Right lobe of liver (tissue), 6 donors: ENCODE measurements at regions of chr4 and their contacts with region 1.

Region 1: GRCh38 chr4:3765271-3766040 is 729 bp upstream of the ADRA2C start:
- DNase-seq: peak in 2 of 3 donors; percentile 40 to 59
- ATAC-seq: peak; percentile 67 to 84 (median 76)
- H3K4me3 ChIP-seq: peak overlapping the region in 1 of 3 donors; percentile 39
- H3K27ac ChIP-seq: no peak overlapping the region
- H3K4me1 ChIP-seq: peaks cover 0 to 3% (median 0%) of the 10 kb centered on the region in 4 donors
- H3K27me3 ChIP-seq: no peaks in the 10 kb centered on the region
- CTCF ChIP-seq: peak in 3 of 4 donors; percentile 17 to 55 (median 22)
- POLR2A ChIP-seq: no peak

Region 2: DNA sequence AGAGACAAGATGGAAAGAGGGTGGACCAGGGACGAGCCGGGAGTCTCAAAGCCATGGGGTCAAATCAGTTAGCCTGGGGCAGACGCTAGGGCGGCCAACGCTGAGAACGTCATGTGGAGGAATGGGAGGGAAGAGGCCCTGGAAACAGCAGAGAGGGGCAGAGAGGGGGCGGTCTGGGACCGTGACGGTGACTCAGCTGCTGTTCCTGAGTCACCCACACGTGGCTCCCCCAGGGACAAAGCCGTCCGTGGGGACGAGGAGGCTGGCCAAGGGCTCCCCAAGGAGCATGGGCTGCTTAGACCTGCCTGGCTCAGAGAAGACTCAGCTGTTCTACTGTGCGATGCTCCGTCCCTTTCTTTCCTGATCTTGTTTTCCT is 124.9 kb before region 1 on chr4:
- intact Hi-C with region 1: no loop called
- DNase-seq: peak in 1 of 3 donors; percentile 44
- ATAC-seq: no peak
- H3K4me3 ChIP-seq: no peak overlapping the region
- H3K27ac ChIP-seq: no peak overlapping the region
- H3K4me1 ChIP-seq: no peaks in the 10 kb centered on the region
- H3K27me3 ChIP-seq: no peaks in the 10 kb centered on the region
- CTCF ChIP-seq: no peak
- POLR2A ChIP-seq: no peak

Region 3: DNA sequence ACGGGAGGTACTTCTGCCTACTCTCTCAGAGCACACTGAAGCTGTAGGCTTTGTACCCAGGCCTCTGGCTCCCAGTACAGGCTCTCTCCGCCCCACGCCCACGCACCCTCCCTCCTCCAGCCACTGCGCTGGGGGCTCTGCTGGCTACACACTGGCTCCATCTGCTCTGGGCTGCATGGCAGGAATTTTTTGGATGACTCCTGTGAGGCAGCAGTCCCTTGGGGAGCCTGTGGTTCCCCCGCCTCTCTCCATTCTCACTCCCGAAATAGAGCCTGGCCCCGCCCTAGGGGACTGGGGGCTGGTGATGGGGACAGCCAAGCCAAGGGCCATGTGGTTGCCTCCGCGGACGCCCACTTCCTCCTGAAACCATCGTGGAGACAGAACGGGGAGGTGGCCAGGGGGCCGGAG is 57.3 kb before region 1 on chr4:
- intact Hi-C with region 1: no loop called
- DNase-seq: peak in 2 of 3 donors; percentile 10 to 42
- ATAC-seq: no peak
- H3K4me3 ChIP-seq: no peak overlapping the region
- H3K27ac ChIP-seq: no peak overlapping the region
- H3K4me1 ChIP-seq: no peaks in the 10 kb centered on the region
- H3K27me3 ChIP-seq: no peaks in the 10 kb centered on the region
- CTCF ChIP-seq: no peak
- POLR2A ChIP-seq: no peak

Region 4: GRCh38 chr4:3871181-3871871 is 105.9 kb after region 1 on chr4:
- intact Hi-C with region 1: loop called (anchors 5 to 10 kb)
- DNase-seq: peak in 1 of 3 donors; percentile 35
- ATAC-seq: no peak
- H3K4me3 ChIP-seq: no peak overlapping the region
- H3K27ac ChIP-seq: no peak overlapping the region
- H3K4me1 ChIP-seq: no peaks in the 10 kb centered on the region
- H3K27me3 ChIP-seq: peaks cover 0 to 15% of the 10 kb centered on the region in 2 donors
- CTCF ChIP-seq: no peak
- POLR2A ChIP-seq: no peak

Region 5: DNA sequence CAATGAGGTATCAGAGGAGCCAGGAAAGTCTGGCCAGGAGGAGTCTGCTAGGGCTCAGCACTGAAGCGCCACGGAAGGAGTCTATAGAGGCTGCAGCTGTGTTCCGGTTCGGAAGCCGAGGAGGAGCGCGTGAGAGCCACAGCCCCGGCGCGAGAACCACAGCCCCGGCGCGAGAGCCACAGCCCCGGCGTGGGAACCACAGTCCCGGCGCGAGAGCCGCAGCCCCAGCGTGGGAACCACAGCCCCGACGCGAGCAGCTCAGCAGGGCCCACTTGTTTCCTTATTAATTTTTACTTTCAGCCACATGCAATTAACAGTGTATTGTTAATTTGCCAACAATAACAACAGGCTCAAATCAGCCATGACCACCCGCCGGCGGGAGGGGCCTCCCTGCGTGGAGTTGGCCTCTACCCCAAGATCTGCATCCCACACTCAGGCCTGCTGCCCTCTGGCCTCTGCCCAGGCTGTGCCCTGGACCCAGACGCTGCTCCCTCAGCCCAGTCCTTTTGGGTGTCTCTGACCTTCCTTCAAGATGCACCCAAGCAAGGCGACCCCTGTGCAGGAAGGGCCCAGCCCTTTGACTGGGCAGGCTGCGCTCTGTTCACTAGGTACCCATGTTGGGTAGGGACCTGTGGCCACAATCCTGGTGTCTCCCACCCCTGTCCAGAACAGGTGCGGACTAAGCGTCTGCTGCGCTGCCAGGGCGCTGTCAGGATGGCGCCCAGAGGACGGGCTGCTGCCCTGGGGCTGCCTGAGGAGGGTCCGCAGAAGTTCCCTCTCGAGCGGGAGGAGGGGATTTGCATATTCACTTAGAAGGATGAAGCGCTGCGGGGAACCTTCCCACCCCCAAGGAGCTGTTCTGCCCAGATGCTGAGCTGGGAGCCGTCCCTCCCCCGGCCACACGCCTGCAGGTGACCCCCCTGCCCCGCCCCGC is 114.5 kb after region 1 on chr4:
- intact Hi-C with region 1: loop called (anchors 5 to 10 kb)
- DNase-seq: peak in 1 of 3 donors; percentile 43
- ATAC-seq: peak; percentile 15 to 52 (median 36)
- H3K4me3 ChIP-seq: no peak overlapping the region
- H3K27ac ChIP-seq: no peak overlapping the region
- H3K4me1 ChIP-seq: no peaks in the 10 kb centered on the region
- H3K27me3 ChIP-seq: peaks cover 0 to 5% of the 10 kb centered on the region in 2 donors
- CTCF ChIP-seq: no peak
- POLR2A ChIP-seq: no peak

Region 6: GRCh38 chr4:4302416-4302815 is 537.0 kb after region 1 on chr4:
- intact Hi-C with region 1: no loop called
- DNase-seq: no peak
- ATAC-seq: no peak
- H3K4me3 ChIP-seq: no peak overlapping the region
- H3K27ac ChIP-seq: no peak overlapping the region
- H3K4me1 ChIP-seq: no peaks in the 10 kb centered on the region
- H3K27me3 ChIP-seq: no peaks in the 10 kb centered on the region
- CTCF ChIP-seq: no peak
- POLR2A ChIP-seq: no peak